Left cardiac atrium (tissue), 4 donors: ENCODE measurements at regions of chr4 and their contacts with region 1.

Region 1: GRCh38 chr4:99894161-99894997 is at the start of gene LAMTOR3:
- DNase-seq: peak; percentile 93
- ATAC-seq: peak; percentile 99
- total RNA-seq, gene LAMTOR3: 29.2 to 32.3 TPM

Region 2: DNA sequence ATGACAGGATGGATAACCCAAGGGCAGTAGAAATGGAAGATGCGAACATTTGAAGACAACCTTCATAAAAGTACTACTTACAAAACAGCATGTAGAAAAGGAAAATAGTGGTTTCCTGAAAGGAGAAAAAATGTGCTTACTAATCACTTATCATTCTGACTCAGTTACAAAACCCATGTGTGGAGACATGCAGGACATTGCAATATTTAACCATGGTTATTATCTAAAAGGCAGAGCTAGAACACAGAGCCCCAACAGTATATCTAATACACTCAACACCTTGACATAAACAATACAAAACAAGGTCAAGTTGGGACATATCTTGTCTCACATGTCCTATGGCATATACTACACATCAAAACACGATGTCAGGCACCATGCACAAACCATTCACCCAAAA is 1021.3 kb before region 1 on chr4:
- intact Hi-C with region 1: no loop called
- DNase-seq: no peak
- ATAC-seq: no peak

Region 3: GRCh38 chr4:99723612-99724011 is 170.8 kb before region 1 on chr4:
- intact Hi-C with region 1: loop called in 1 of 2 experiments (anchors 10 kb)
- DNase-seq: peak; percentile 64
- ATAC-seq: peak; percentile 77 to 98

Region 4: GRCh38 chr4:99949034-99949998 is 54.9 kb after region 1 on chr4:
- intact Hi-C with region 1: loop called (anchors 5 to 10 kb)
- DNase-seq: peak; percentile 87
- ATAC-seq: peak; percentile 35 to 39

Region 5: GRCh38 chr4:100049872-100050271 is 155.5 kb after region 1 on chr4:
- intact Hi-C with region 1: no loop called
- DNase-seq: no peak
- ATAC-seq: no peak